ENCODE measurements at regions of chr14 and their contacts with region 1.

Region 1: DNA sequence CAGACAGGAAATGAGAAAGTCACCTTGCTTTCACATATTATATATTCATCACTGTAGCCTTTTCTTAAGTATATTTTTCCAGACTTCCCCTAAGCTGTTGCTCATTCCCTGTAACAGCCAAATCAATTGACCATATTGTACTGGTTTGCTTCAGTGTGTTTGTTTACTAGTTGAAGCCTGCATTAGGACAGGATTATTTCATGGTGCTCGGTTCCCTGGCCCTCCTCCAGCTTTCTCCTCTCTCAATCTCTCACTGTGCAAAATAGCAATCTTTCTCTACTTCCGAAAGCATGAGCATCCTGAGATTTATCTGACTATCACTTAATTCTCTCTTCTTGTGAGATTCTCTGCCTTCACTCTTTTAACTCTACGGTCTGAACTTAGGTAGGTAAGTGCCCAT is 2.4 kb downstream of the SLC35F4 start:
- DNase-seq: no peak
- ATAC-seq: no peak
- H3K4me3 ChIP-seq: no peak overlapping the region
- H3K27ac ChIP-seq: no peak overlapping the region
- H3K4me1 ChIP-seq: no peaks in the 10 kb centered on the region
- H3K27me3 ChIP-seq: peaks cover 66% of the 10 kb centered on the region
- CTCF ChIP-seq: no peak

Region 2: GRCh38 chr14:55938249-55938791 is 1925.2 kb before region 1 on chr14:
- CTCF ChIA-PET with region 1: no interaction called
- POLR2A ChIA-PET with region 1: no interaction called
- intact Hi-C with region 1: no loop called
- DNase-seq: peak; percentile 56
- ATAC-seq: peak; percentile 66
- H3K4me3 ChIP-seq: no peak overlapping the region
- H3K27ac ChIP-seq: no peak overlapping the region
- H3K4me1 ChIP-seq: peaks cover 8% of the 10 kb centered on the region; the same call in 1 of the 2 replicates
- H3K27me3 ChIP-seq: peaks cover 12% of the 10 kb centered on the region; the same call in 1 of the 2 replicates
- CTCF ChIP-seq: no peak

Region 3: GRCh38 chr14:57974896-57975295 is 111.4 kb after region 1 on chr14:
- CTCF ChIA-PET with region 1: interaction called, 10 read pairs
- POLR2A ChIA-PET with region 1: no interaction called
- intact Hi-C with region 1: no loop called
- DNase-seq: no peak
- ATAC-seq: no peak
- H3K4me3 ChIP-seq: no peak overlapping the region
- H3K27ac ChIP-seq: no peak overlapping the region
- H3K4me1 ChIP-seq: no peaks in the 10 kb centered on the region
- H3K27me3 ChIP-seq: peaks cover 77% of the 10 kb centered on the region
- CTCF ChIP-seq: no peak

Measured in PC-3 (cell line).